Sciatic nerve (tissue), 2 donors: ENCODE measurements at regions of chr22 and their contacts with region 1.

Region 1: GRCh38 chr22:23774743-23775566 is 2.3 kb downstream of the MMP11 start:
- DNase-seq: no peak
- ATAC-seq: peak; percentile 44

Region 2: DNA sequence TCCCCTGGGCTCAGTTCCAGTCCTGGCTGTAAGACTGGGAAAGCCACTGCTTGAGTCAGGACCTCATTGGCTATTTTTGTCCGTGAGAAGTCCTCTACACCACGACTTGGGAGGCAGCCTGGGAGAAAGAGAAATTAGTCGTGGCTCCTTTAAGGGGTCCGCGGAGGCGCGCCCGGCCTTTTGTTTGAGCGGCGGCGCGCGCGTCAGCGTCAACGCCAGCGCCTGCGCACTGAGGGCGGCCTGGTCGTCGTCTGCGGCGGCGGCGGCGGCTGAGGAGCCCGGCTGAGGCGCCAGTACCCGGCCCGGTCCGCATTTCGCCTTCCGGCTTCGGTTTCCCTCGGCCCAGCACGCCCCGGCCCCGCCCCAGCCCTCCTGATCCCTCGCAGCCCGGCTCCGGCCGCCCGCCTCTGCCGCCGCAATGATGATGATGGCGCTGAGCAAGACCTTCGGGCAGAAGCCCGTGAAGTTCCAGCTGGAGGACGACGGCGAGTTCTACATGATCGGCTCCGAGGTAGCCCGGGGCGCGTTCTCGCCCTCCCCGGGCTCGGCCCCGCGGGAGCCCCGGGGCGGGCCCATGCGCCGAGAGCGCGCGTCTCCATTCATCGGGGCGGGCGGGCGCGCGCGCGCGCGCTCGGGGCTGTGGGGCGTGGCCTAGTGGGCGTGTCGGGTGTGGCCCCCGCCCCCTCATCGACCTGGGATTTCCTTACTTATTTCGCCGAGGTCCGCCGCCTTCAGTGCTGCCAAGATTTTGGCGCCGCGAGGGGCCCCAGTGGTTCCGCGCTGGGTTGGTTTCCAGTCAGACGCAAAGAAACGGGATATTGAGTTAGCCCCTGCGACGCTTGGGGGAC is 12.0 kb after region 1 on chr22 and contains the start of gene SMARCB1:
- intact Hi-C with region 1: no loop called
- DNase-seq: peak; percentile 93
- ATAC-seq: peak; percentile 89
- total RNA-seq, gene SMARCB1: 56.2 TPM

Region 3: DNA sequence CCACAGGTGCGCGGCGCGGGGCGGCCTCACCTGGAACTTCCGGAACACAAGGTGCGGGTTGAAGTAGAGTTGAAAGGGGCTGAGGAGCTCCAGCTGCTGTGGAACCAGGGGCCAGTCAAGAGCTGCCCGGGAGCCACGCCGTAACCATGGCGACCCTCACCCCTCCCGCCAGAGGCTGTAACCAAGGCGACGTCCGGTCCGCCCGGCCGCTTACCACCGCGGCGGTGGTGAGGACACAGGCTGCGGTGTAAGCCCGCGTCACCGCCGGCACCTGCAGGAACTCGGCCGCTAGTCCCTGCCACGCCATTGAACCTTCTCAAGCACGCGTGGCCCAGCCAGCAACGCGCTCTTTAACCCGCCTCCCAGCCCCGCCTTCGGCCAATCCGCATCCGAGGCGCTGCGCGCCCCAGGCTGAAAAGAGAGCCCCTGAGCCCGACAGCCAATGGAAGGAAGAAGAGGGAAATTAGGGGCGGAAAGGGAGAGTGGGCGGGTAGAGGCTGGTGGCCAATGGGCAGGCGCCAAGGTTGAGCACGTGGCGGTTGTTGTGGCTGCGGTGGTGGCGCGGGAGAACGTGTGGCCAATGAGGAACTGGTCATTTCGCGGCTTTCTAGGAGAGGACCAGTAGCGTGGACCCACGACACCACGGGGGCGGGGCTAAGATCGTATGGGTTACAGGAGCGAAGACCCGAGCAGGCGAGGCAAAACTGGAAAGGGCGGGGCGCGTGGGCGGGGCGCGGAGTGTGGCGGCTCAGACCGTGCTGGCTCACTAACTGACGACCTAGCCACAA is 63.9 kb after region 1 on chr22 and contains the start of gene DERL3:
- intact Hi-C with region 1: loop called (anchors 5 kb)
- DNase-seq: peak; percentile 98
- ATAC-seq: peak; percentile 94
- total RNA-seq, gene DERL3: 2.7 TPM